CD8-positive, alpha-beta memory T cell (primary cell): ENCODE measurements at regions of chr16 and their contacts with region 1.

Region 1: DNA sequence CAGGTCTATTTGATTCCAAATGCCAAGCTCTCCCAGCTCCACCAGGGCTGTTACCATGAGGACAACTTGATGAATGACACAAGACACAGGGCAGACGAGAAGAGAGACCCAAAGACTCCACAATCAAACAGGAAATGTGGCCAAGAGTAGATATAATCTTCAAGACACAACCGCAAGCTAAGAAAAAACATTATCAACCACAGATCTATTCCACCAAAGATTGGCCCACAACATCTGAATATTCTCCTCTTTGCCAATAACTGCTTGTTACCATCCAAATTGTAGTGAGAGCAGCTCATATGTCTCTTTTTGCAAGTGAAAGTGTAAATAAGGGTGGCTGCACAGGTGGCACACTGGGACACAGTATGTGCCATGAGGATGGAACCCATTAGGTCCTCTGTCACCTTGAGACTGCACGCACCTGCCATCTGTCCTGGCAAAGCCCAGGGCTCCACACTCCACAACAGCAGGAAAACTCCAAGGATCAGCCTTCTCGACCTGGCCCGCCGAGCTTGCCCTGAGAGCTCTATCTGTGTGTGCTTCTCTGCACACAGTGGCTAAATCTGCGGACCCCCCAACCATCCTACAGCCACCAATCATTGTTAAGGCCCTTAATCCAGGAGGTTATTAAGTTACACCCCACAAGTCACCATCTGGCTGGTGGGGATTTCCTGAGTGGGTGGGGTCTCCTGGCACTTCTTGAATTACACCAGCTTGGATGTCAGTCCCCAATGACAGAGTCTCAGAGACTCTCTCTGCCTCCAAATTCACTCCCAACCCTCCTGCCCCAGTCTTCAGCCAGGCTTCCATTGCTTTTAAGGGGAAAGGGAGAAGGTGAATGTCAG is 50.5 kb downstream of the DYNLRB2 start:
- DNase-seq: peak in 4 of 5 donors; percentile 3 to 74 (median 71)
- H3K4me3 ChIP-seq: peak overlapping the region; percentile 30
- H3K4me3 Mint-ChIP-seq: peak overlapping the region; percentile 9 to 76 (median 59)
- H3K27ac ChIP-seq: no peak overlapping the region
- H3K27ac Mint-ChIP-seq: peak overlapping the region in 7 of 8 donors; percentile 8 to 68 (median 40)
- H3K4me1 ChIP-seq: peaks cover 18% of the 10 kb centered on the region
- H3K4me1 Mint-ChIP-seq: peaks cover 29 to 44% (median 36%) of the 10 kb centered on the region in 3 donors
- H3K27me3 ChIP-seq: peaks cover 4% of the 10 kb centered on the region
- H3K27me3 Mint-ChIP-seq: peaks cover 18 to 23% of the 10 kb centered on the region in 2 donors

Region 2: DNA sequence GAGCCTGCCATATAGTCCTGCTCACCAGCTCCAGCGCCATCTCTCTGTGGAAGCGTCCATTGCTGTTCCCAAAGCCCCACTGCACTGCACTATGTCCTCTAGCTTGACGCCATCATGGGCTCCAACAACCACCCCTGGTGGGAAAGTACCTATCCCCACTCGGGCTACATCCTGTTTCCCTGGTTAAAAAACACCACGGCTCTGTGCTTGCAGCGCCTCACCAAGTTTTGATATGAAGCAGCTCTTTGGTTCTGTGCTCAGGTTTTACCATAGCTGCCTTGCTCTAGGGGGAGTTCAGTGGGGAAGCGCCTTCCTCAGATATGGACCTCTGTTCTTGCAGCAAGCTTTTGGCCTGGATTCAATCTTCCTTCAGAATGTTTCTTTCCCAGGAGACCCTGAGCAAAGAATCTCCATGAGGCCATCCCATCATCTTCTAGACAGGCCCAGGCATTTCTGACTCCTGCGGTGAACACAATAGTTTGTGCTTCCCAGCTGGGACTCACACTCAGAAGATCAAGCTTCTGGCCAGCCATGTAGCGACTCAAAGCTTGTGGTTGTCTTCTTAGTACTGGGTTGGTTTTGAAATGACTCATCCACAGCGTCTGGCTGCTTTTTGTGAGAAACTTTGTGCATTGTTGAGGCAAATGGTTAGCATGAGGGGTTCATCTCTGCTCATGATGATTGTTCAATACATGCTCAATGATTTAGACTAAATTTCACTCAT is 11.0 kb before region 1 on chr16:
- CTCF ChIA-PET with region 1: interaction called, 17 read pairs
- POLR2A ChIA-PET with region 1: interaction called, 21 read pairs
- DNase-seq: peak; percentile 31 to 83 (median 43)
- H3K4me3 ChIP-seq: peak overlapping the region; percentile 6
- H3K4me3 Mint-ChIP-seq: peak overlapping the region in 6 of 7 donors; percentile 63 to 69 (median 64)
- H3K27ac ChIP-seq: peak overlapping the region; percentile 60
- H3K27ac Mint-ChIP-seq: peak overlapping the region; percentile 51 to 97 (median 85)
- H3K4me1 ChIP-seq: peaks cover 29% of the 10 kb centered on the region
- H3K4me1 Mint-ChIP-seq: peaks cover 26 to 51% (median 50%) of the 10 kb centered on the region in 3 donors
- H3K27me3 ChIP-seq: no peaks in the 10 kb centered on the region
- H3K27me3 Mint-ChIP-seq: peaks cover 0 to 1% of the 10 kb centered on the region in 2 donors